Activated CD8-positive, alpha-beta memory T cell treated with anti-CD3 and anti-CD28 coated beads, Interleukin-2, amount 10 ng/mL, durations not matched to agents 7 days and 5 days (primary cell): ENCODE measurements at regions of chr9 and their contacts with region 1.

Region 1: GRCh38 chr9:71783120-71783530 is 14.8 kb upstream of the CEMIP2 start:
- DNase-seq: peak; percentile 94
- ATAC-seq: peak; percentile 93
- H3K4me3 Mint-ChIP-seq: peak overlapping the region; percentile 60
- H3K27ac Mint-ChIP-seq: peak overlapping the region; percentile 99
- H3K4me1 Mint-ChIP-seq: peaks cover 47% of the 10 kb centered on the region
- H3K27me3 Mint-ChIP-seq: no peaks in the 10 kb centered on the region

Region 2: GRCh38 chr9:71795097-71795813 is 12.1 kb after region 1 on chr9:
- CTCF ChIA-PET with region 1: interaction called, 32 read pairs
- DNase-seq: no peak
- ATAC-seq: peak; percentile 86
- H3K4me3 Mint-ChIP-seq: peak overlapping the region; percentile 21
- H3K27ac Mint-ChIP-seq: peak overlapping the region; percentile 93
- H3K4me1 Mint-ChIP-seq: peaks cover 39% of the 10 kb centered on the region
- H3K27me3 Mint-ChIP-seq: no peaks in the 10 kb centered on the region